Prostate gland (tissue), 2 donors: ENCODE measurements at regions of chr20 and their contacts with region 1.

Region 1: GRCh38 chr20:17873410-17874270 is 95.0 kb downstream of the SNX5 start:
- DNase-seq: peak; percentile 92
- H3K4me3 ChIP-seq: peak overlapping the region in 1 of 2 donors; percentile 7
- H3K27ac ChIP-seq: peak overlapping the region; percentile 84 to 91
- H3K4me1 ChIP-seq: peaks cover 20% of the 10 kb centered on the region
- H3K27me3 ChIP-seq: no peaks in the 10 kb centered on the region
- CTCF ChIP-seq: no peak
- POLR2A ChIP-seq: peak; percentile 32

Region 2: GRCh38 chr20:17843246-17844132 is 30.2 kb before region 1 on chr20:
- intact Hi-C with region 1: loop called (anchors 2 kb)
- DNase-seq: no peak
- H3K4me3 ChIP-seq: no peak overlapping the region
- H3K27ac ChIP-seq: peak overlapping the region; percentile 61 to 75
- H3K4me1 ChIP-seq: no peaks in the 10 kb centered on the region
- H3K27me3 ChIP-seq: no peaks in the 10 kb centered on the region
- CTCF ChIP-seq: no peak
- POLR2A ChIP-seq: no peak